ENCODE measurements at regions of chr11 and their contacts with region 1.

Region 1: GRCh38 chr11:77473801-77474683 is at the start of gene PAK1:
- DNase-seq: peak; percentile 95
- ATAC-seq: peak; percentile 82
- H3K4me3 Mint-ChIP-seq: peak within 1 kb of the TSS; percentile 90
- H3K27ac Mint-ChIP-seq: peak within 1 kb of the TSS; percentile 100
- H3K4me1 Mint-ChIP-seq: peaks cover 63% of the 10 kb centered on the region
- H3K27me3 Mint-ChIP-seq: no peaks in the 10 kb centered on the region; the same call in 1 of the 2 replicates
- CTCF ChIP-seq: no peak
- total RNA-seq, gene PAK1: 160 to 191 TPM (median 166 TPM) in 3 replicates

Region 2: DNA sequence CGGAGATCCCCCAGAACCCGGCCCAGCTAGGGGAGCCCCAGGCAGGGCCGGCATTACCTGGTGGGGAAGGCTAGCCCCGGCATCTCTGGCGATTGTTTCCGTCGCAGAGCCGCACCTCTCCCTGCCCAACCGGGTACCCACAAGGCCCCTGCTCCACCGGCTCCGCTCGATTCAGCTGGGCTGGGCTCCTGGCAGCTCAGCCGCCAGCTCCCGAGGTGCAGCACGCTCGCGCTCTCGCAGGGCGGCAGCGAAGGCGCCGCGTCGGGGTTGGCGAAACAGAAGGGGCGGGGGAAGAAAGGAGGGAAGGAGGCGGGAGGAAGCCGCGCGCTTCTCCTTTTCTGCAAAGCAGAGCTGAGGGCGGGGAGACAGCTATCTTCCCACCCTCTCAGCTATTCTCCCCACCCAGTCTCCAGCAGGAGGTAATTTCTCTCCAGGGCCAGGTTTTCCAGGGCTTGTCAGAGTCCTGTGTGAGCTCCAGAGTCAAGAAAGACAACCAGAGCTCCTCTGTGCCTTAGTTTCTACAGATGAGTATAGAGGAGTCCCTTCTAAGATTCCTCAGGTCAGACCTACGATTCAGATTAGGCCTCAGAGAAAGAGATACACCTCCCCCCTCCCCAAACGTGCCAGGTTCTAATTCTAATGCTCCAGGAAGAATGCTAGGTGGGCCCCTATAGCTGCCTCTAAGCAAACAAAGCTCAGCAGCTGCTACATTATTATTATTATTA is 62.2 kb before region 1 on chr11:
- CTCF ChIA-PET with region 1: interaction called, 17 read pairs
- POLR2A ChIA-PET with region 1: interaction called, 4 read pairs
- DNase-seq: peak; percentile 87
- ATAC-seq: peak; percentile 88
- H3K4me3 Mint-ChIP-seq: peak overlapping the region; percentile 82
- H3K27ac Mint-ChIP-seq: peak overlapping the region; percentile 93
- H3K4me1 Mint-ChIP-seq: peaks cover 71% of the 10 kb centered on the region
- H3K27me3 Mint-ChIP-seq: no peaks in the 10 kb centered on the region
- CTCF ChIP-seq: no peak

Region 3: DNA sequence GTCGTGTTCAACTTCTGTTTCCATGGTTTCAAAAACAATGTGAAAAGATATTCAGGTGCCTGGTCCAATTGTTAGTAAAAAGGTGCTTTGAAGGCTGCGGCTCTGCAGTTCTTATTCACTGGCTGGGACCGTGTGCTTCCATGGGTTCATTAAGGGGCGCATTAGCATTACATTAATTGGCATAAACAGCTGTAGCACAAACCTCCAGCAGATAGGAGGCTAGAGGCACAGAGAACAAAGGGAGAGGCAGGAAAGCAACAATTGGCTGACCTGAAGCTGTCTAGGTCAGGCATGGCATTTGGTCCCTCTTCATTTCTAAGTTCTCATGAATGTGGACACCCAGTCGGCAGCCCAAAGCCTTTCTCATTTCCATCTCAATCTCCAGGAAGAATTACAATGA is 16.7 kb before region 1 on chr11:
- CTCF ChIA-PET with region 1: interaction called, 28 read pairs
- POLR2A ChIA-PET with region 1: interaction called, 3 read pairs
- DNase-seq: no peak
- ATAC-seq: peak; percentile 71
- H3K4me3 Mint-ChIP-seq: peak overlapping the region; percentile 45
- H3K27ac Mint-ChIP-seq: peak overlapping the region; percentile 95
- H3K4me1 Mint-ChIP-seq: peaks cover 84% of the 10 kb centered on the region
- H3K27me3 Mint-ChIP-seq: no peaks in the 10 kb centered on the region
- CTCF ChIP-seq: no peak

Region 4: DNA sequence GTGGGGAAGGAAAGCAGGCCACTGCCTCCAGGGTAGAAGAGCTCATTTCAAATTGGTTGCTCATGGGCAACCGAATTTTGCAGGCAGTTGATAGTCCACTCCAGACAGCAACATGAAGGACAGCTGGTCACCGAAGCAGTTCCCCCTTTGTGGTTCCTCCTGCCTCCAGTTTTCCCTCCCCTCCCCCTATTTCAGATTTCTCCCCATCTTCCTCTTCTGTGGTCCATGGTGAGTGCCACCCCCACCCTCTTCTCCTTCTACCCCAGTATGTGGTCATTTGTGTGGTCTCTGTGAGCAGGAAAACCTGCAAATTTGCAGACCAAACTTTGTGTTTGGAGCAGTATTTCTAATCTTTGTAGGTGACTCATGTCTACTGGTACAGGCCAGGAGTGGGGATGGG is 38.0 kb after region 1 on chr11:
- CTCF ChIA-PET with region 1: no interaction called
- POLR2A ChIA-PET with region 1: no interaction called
- DNase-seq: no peak
- ATAC-seq: no peak
- H3K4me3 Mint-ChIP-seq: no peak overlapping the region
- H3K27ac Mint-ChIP-seq: peak overlapping the region; percentile 44; the same call in 1 of the 2 replicates
- H3K4me1 Mint-ChIP-seq: peaks cover 19% of the 10 kb centered on the region
- H3K27me3 Mint-ChIP-seq: no peaks in the 10 kb centered on the region
- CTCF ChIP-seq: no peak

Region 5: DNA sequence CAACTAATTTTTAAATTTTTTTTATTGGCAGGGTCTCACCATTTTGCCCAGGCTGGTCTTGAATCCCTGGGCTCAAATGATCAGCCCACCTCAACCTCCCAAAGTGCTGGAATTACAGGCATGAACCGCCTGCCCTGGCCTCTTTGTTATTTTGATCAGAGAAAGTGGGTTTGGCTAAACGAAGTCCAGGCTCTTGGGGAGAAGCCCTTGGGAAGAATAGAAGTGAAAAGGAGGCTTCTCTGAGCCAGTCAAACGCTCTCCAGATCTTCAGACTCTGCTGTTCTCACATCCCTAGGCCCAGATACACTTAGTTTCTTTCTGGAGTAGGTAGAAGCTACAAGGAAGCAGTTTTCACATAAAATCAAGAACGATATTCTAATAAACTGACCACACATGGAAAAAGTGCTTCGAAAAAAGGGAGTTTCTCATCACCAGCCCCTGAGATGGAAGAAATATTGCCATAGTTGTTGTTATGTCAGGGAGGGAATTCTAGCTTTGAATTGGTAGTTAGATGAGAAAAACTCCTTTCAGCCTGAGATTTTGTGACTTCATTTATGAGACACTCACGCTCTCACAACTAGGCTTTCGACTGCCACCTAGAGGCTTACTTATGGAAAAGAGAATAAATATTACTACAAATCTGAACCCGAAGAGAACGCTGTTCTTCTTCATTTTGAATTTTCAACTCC is 74.0 kb after region 1 on chr11:
- CTCF ChIA-PET with region 1: interaction called, 19 read pairs
- POLR2A ChIA-PET with region 1: no interaction called
- DNase-seq: peak; percentile 40
- ATAC-seq: peak; percentile 98
- H3K4me3 Mint-ChIP-seq: peak overlapping the region; percentile 47
- H3K27ac Mint-ChIP-seq: peak overlapping the region; percentile 98
- H3K4me1 Mint-ChIP-seq: peaks cover 20% of the 10 kb centered on the region
- H3K27me3 Mint-ChIP-seq: no peaks in the 10 kb centered on the region
- CTCF ChIP-seq: peak; percentile 48

Measured in WTC11 (cell line).